Panc1 (cell line): ENCODE measurements at regions of chr3 and their contacts with region 1.

Region 1: DNA sequence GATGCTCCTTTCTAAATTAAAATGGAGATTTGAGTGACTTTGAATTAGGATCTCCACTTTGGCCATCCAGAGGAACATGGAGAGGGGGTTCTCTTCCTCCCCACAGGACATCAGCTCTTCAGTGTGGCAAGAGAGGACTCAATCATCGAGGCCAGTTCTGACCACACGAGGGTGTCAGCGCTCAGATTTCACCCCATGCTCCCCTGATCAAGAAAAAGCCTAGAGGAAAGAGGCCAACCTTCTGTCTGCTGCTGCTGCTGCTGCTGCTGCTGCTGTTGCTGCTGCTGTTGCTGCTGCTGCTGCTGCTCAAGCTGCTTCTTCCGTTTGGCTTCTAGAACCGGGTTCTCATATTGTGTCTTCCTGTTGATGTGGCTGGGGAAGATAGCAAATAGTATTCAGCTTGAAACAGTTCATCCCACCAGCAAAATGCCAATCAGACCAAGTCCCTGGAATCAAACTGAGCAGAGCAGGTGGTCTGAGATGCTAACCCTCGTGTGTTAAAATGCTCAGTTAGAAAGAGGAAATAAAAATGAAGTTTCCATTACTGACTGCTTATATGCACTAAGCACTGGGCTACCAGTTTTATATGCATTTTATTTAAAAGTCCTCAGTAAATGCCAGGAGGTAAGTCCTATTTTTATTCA is 599.0 kb downstream of the MAGI1 start:
- DNase-seq: no peak
- ATAC-seq: peak; percentile 78
- H3K4me3 ChIP-seq: no peak overlapping the region
- H3K27ac ChIP-seq: no peak overlapping the region
- H3K4me1 ChIP-seq: no peaks in the 10 kb centered on the region
- H3K27me3 ChIP-seq: no peaks in the 10 kb centered on the region
- CTCF ChIP-seq: peak; percentile 62

Region 2: DNA sequence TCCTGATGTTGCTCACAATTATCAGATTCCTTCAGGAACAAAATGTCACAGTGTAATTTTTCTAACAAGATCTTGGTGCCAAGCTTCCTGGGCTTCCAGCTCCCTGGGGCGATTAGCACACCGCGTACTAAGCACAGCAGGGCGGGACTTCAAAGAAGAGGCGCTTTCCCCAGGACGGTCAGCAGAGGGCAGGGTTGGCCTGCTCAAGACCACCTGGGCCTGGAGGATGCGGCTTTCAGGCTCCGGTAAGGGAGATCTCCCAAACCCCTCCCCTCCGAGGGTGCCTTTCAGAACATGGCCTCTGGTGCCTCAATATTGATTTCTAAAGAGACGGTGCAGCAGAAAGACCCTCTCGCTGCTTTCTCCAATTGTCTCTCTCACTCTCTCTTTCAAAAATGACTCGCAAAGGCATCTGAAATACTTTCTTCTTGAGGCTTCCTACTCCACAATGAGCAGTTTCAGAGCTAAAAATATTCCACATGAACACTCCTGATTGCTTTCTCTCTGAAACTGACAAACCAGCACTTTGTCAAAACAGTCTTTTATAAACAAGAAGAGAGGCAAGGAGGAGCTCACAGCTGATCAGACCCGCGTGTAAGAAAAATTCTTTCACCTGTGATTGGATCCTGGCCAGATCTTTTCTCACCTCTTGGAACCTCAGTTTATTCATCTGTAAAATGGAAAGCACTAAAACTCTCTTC is 906.0 kb before region 1 on chr3:
- CTCF ChIA-PET with region 1: no interaction called
- POLR2A ChIA-PET with region 1: no interaction called
- in situ Hi-C with region 1: no loop called
- intact Hi-C with region 1: loop called (anchors 5 kb)
- DNase-seq: peak; percentile 38
- ATAC-seq: peak; percentile 97
- H3K4me3 ChIP-seq: no peak overlapping the region
- H3K27ac ChIP-seq: no peak overlapping the region
- H3K4me1 ChIP-seq: no peaks in the 10 kb centered on the region
- H3K27me3 ChIP-seq: peaks cover 8% of the 10 kb centered on the region
- CTCF ChIP-seq: peak; percentile 81

Region 3: GRCh38 chr3:65672871-65673815 is 233.4 kb after region 1 on chr3:
- CTCF ChIA-PET with region 1: interaction called, 7 read pairs
- POLR2A ChIA-PET with region 1: no interaction called
- in situ Hi-C with region 1: no loop called
- intact Hi-C with region 1: loop called (anchors 10 kb)
- DNase-seq: peak; percentile 22
- ATAC-seq: no peak
- H3K4me3 ChIP-seq: no peak overlapping the region
- H3K27ac ChIP-seq: no peak overlapping the region
- H3K4me1 ChIP-seq: no peaks in the 10 kb centered on the region
- H3K27me3 ChIP-seq: no peaks in the 10 kb centered on the region
- CTCF ChIP-seq: peak; percentile 77

Region 4: DNA sequence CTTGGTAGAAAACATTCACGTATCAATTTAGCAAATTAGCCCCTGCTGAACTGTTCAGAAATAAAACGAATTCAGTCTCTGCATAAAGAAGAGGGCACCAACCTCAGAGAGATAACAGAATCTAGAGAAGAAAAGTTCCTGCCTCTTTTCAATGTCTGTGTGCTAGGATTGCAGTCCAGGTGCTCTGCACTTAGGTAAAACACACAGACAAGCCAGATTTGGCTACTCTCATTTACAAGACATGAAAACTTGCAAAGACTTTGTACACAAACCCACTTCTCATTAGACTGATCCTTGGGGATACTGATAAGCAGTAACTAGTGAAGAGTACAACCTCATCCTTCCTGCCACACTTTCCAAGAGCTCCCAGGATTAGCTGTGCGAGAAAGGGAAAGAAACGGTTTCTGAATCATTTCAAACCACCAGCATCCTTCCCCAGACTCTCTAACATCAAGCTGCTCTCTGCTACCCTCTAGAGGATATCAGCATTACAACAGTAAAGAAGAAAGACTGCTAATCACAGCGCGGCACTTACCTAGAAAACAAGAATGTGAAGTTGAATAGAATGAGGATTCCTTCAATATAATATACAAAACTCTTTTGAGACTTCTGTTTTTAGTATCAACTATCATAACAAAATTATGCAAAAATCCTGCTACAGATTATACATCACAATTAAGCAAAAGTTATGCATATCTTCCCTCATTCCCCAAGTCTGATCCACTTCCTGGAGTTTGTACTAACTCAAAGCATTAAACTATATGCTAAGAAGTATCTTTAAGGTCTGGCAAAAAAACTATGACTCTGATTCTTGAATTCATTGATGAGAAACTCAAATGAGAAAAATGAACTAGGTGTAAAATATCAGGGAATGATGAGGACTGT is 292.5 kb after region 1 on chr3:
- CTCF ChIA-PET with region 1: interaction called, 4 read pairs
- POLR2A ChIA-PET with region 1: no interaction called
- in situ Hi-C with region 1: no loop called
- intact Hi-C with region 1: loop called (anchors 10 kb)
- DNase-seq: peak; percentile 62
- ATAC-seq: peak; percentile 84
- H3K4me3 ChIP-seq: no peak overlapping the region
- H3K27ac ChIP-seq: no peak overlapping the region
- H3K4me1 ChIP-seq: no peaks in the 10 kb centered on the region
- H3K27me3 ChIP-seq: no peaks in the 10 kb centered on the region
- CTCF ChIP-seq: peak; percentile 80

Region 5: GRCh38 chr3:66138336-66139313 is 698.9 kb after region 1 on chr3:
- CTCF ChIA-PET with region 1: interaction called, 14 read pairs
- POLR2A ChIA-PET with region 1: no interaction called
- in situ Hi-C with region 1: no loop called
- intact Hi-C with region 1: no loop called
- DNase-seq: no peak
- ATAC-seq: peak; percentile 70; the same call in 1 of the 2 replicates
- H3K4me3 ChIP-seq: no peak overlapping the region
- H3K27ac ChIP-seq: no peak overlapping the region
- H3K4me1 ChIP-seq: no peaks in the 10 kb centered on the region
- H3K27me3 ChIP-seq: no peaks in the 10 kb centered on the region
- CTCF ChIP-seq: peak; percentile 74